Sigmoid colon (tissue), 7 donors: ENCODE measurements at regions of chr3 and their contacts with region 1.

Region 1: DNA sequence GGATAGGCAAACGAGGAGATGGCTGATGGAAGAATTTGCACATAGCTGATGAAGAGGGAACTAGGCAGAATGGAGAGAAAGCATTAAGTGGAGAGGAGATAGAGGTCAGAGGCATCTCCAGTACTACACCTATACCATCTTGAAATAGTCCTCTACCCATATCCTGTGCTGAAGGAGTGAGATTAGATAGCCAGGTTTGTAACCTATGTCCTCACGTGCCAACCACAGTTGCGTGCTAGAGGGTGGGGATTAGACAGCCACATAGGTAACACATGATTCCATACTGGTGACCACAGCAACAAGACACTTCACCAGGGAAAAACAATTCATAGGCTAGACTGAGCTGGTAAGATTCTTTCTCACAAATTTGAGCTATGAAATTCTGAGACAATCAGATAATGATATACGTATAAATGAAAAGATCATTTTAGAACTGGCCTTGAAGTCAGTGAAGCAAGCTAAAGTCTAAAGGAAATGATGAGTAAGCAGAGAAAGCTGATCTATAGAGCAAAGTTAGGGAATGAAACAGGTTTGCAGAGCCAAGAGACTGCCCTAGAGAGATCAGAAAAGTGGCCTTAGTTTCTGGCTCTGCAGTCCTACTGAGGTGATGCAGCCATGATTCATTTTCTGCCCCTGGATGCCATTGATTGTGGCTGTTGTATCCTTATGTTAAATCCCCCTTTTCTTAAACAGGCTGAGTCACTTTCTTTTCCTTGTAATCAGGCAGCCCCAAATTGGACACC is 17.7 kb downstream of the MYNN start:
- DNase-seq: no peak
- H3K4me3 ChIP-seq: no peak overlapping the region
- H3K27ac ChIP-seq: no peak overlapping the region
- H3K4me1 ChIP-seq: no peaks in the 10 kb centered on the region
- H3K27me3 ChIP-seq: no peaks in the 10 kb centered on the region
- CTCF ChIP-seq: no peak
- EP300 ChIP-seq: no peak
- POLR2A ChIP-seq: no peak

Region 2: DNA sequence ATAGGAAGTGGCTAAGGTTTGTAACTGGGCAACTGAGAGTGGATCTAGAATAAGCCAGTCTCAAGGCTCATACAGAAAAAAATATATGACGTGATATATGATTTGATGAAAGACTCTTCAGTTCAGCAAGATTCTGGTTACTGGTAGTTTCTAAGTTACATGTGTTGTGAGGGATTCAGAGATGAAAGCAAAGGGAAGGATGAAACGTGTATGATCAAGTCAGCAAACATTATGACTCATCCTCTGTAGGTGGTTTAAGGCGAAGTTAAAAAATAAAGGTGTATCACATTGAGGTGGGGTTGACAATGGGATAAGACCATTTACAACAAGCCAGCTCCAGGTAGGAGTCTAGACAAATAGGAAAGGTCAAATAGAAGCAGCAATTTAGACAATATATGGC is 42.2 kb before region 1 on chr3:
- intact Hi-C with region 1: no loop called
- DNase-seq: no peak
- H3K4me3 ChIP-seq: no peak overlapping the region
- H3K27ac ChIP-seq: no peak overlapping the region
- H3K4me1 ChIP-seq: no peaks in the 10 kb centered on the region
- H3K27me3 ChIP-seq: peaks cover 0 to 4% (median 0%) of the 10 kb centered on the region in 3 donors
- CTCF ChIP-seq: no peak
- EP300 ChIP-seq: no peak
- POLR2A ChIP-seq: no peak

Region 3: DNA sequence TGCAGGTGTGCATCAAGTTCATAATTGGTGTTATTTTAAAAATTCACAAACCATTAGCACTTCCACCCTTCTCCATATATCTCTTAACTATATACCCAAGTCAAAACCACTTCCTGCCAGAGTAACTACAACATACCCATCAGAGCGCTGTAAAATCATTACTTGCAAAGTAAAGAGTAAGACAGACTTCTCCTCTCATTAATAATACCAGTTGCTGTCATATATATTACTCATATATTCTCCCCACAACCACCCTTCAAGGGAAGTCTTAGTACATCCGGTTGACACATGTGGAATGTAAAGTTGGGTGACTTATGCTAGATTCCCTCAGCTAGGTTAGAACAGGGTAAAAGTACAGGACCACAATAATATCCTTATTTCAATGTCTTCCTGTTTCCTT is 31.6 kb before region 1 on chr3:
- intact Hi-C with region 1: no loop called
- DNase-seq: no peak
- H3K4me3 ChIP-seq: no peak overlapping the region
- H3K27ac ChIP-seq: no peak overlapping the region
- H3K4me1 ChIP-seq: peaks cover 0 to 13% (median 4%) of the 10 kb centered on the region in 4 donors
- H3K27me3 ChIP-seq: no peaks in the 10 kb centered on the region
- CTCF ChIP-seq: no peak
- EP300 ChIP-seq: no peak
- POLR2A ChIP-seq: no peak

Region 4: DNA sequence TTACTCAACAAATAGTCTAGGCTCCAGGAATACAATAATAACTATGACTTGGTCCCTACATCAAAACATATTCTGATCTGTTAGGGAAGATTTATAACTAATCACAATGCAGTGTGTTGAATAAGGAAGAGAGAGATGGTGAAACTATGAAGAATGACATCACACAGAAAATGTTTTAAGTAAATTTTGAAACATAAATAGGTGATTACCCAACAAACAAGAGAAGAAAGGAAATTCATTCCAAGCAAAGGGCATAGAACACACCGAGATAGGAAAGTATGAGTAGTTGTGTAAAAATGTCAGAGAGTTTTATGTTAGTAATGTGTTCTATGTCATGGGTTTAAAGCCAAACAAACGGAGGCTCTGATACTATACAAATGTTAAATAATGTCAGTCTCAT is 189.2 kb after region 1 on chr3:
- intact Hi-C with region 1: loop called (anchors 5 kb)
- DNase-seq: no peak
- H3K4me3 ChIP-seq: no peak overlapping the region
- H3K27ac ChIP-seq: no peak overlapping the region
- H3K4me1 ChIP-seq: no peaks in the 10 kb centered on the region
- H3K27me3 ChIP-seq: no peaks in the 10 kb centered on the region
- CTCF ChIP-seq: no peak
- EP300 ChIP-seq: no peak
- POLR2A ChIP-seq: no peak

Region 5: DNA sequence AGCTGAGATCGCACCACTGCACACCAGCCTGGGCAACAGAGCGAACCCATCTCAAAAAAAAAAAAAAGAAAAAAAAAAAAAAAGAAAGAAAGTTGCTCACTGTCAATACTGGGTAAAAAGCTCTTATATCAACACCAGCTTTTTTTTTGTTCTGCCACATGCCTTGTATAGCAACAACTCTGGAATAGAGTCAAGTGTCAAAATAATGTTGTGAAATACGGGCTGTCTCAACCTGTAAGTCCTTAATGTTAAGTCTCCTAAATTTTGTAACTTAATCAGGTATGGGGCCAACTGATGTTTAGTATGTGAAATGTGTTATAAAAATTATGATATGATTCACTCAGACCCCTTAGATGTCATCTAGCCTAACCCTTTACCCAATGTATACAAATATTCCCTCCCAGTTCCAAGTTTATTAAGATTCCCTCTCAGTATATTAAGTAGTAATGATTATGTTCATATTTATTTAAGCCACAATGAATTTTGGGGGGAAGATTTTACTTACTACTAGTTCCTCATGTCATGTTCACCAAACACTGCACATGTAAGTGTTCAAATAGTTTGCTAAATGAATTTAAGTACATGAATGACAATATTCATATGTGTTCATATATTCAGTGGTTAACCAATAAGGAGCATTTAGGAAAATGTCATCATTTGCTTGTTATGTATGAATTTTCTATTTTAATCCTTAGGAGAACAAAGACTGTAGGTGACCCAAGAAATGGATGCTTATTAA is 299.2 kb after region 1 on chr3:
- intact Hi-C with region 1: loop called (anchors 10 kb)
- DNase-seq: no peak
- H3K4me3 ChIP-seq: no peak overlapping the region
- H3K27ac ChIP-seq: no peak overlapping the region
- H3K4me1 ChIP-seq: no peaks in the 10 kb centered on the region
- H3K27me3 ChIP-seq: no peaks in the 10 kb centered on the region
- CTCF ChIP-seq: no peak
- EP300 ChIP-seq: no peak
- POLR2A ChIP-seq: no peak

Region 6: DNA sequence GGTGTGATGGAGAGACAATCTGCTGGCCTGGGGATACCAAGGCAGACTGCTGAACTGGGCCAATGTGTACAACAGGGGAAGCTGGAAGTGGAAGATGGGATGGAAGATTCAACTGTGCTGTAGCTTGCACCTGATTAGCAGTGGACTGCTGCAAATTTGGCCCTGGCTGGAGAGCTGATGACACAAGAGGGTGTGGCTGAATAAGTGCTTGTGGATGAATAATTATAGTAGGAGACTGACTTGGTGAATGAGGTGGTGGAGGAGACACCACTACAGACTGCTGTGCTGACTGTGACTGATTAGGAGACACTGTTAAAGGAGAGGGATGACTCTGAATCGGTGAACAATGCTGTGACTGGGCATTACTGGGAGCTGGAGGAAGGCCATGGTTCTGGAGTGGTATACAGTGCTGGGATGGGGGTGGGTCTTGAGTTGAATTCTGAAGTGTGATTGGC is 338.1 kb after region 1 on chr3:
- intact Hi-C with region 1: no loop called
- DNase-seq: no peak
- H3K4me3 ChIP-seq: no peak overlapping the region
- H3K27ac ChIP-seq: no peak overlapping the region
- H3K4me1 ChIP-seq: peaks cover 0 to 3% (median 0%) of the 10 kb centered on the region in 4 donors
- H3K27me3 ChIP-seq: no peaks in the 10 kb centered on the region
- CTCF ChIP-seq: no peak
- EP300 ChIP-seq: no peak
- POLR2A ChIP-seq: no peak